ENCODE measurements at regions of chr10 and their contacts with region 1.

Region 1: DNA sequence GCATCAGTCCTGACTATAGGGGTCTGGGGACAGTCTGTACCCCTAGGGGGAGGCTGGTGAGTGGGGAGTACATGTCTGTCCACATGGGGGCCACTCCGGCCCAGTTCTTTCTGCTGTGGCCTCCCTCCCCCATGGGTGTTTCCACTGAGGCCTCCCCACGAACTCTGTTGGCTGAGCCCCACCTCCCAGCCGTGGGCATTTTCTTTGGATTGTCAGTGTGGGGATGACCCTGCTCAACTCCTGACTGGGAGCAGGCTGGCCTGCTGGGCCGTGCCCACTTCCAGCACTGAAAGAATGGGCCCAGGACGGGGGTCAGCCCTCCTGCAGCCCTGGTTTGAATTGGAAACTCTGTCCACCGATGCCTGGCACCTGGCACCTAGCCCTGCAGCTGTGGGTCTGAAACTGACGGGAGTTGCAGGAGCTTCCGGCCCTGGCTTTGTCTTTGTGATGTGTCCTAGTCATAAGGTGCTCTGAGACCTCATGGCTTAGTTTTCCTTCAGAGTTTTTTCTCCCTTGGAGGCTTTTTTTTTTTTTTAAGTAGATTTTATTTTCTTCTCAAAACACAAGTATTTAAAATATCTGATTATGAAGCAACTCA is 46.5 kb downstream of the LHPP start:
- DNase-seq: no peak
- H3K4me3 ChIP-seq: no peak overlapping the region
- H3K27ac ChIP-seq: no peak overlapping the region
- H3K4me1 ChIP-seq: peaks cover 11% of the 10 kb centered on the region
- H3K27me3 ChIP-seq: no peaks in the 10 kb centered on the region
- CTCF ChIP-seq: no peak

Region 2: GRCh38 chr10:123743976-123744411 is 764.2 kb before region 1 on chr10:
- CTCF ChIA-PET with region 1: no interaction called
- dilution Hi-C with region 1: no loop called
- in situ Hi-C with region 1: no loop called
- intact Hi-C with region 1: no loop called
- DNase-seq: no peak
- H3K4me3 ChIP-seq: no peak overlapping the region
- H3K27ac ChIP-seq: no peak overlapping the region
- H3K4me1 ChIP-seq: no peaks in the 10 kb centered on the region
- H3K27me3 ChIP-seq: peaks cover 5% of the 10 kb centered on the region
- CTCF ChIP-seq: no peak

Region 3: GRCh38 chr10:124332426-124332825 is 175.7 kb before region 1 on chr10:
- CTCF ChIA-PET with region 1: no interaction called
- dilution Hi-C with region 1: no loop called
- in situ Hi-C with region 1: no loop called
- intact Hi-C with region 1: no loop called
- DNase-seq: no peak
- H3K4me3 ChIP-seq: no peak overlapping the region
- H3K27ac ChIP-seq: no peak overlapping the region
- H3K4me1 ChIP-seq: no peaks in the 10 kb centered on the region
- H3K27me3 ChIP-seq: no peaks in the 10 kb centered on the region
- CTCF ChIP-seq: no peak

Region 4: DNA sequence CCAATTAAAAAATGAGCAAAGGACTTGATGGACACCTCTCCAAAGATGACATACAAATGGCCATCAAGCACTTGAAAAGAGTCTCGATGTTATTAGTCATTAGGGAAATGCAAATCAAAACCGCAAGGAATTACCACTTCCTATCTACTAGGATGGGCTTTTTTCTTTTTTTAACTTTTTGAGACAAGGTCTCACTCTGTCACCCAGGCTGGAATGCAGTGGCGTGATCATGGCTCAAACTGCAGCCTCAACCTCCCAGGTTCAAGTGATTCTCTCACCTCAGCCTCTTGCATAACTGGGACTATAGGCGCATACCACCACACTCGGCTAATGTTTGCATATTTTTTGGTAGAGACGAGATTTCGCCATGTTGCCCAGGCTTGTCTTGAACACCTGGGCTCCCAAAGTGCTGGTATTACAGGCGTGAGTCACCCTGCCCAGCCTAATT is 72.0 kb before region 1 on chr10:
- CTCF ChIA-PET with region 1: no interaction called
- dilution Hi-C with region 1: no loop called
- in situ Hi-C with region 1: no loop called
- intact Hi-C with region 1: no loop called
- DNase-seq: peak; percentile 99
- H3K4me3 ChIP-seq: no peak overlapping the region
- H3K27ac ChIP-seq: peak overlapping the region; percentile 50
- H3K4me1 ChIP-seq: peaks cover 33% of the 10 kb centered on the region
- H3K27me3 ChIP-seq: no peaks in the 10 kb centered on the region
- CTCF ChIP-seq: no peak

Region 5: DNA sequence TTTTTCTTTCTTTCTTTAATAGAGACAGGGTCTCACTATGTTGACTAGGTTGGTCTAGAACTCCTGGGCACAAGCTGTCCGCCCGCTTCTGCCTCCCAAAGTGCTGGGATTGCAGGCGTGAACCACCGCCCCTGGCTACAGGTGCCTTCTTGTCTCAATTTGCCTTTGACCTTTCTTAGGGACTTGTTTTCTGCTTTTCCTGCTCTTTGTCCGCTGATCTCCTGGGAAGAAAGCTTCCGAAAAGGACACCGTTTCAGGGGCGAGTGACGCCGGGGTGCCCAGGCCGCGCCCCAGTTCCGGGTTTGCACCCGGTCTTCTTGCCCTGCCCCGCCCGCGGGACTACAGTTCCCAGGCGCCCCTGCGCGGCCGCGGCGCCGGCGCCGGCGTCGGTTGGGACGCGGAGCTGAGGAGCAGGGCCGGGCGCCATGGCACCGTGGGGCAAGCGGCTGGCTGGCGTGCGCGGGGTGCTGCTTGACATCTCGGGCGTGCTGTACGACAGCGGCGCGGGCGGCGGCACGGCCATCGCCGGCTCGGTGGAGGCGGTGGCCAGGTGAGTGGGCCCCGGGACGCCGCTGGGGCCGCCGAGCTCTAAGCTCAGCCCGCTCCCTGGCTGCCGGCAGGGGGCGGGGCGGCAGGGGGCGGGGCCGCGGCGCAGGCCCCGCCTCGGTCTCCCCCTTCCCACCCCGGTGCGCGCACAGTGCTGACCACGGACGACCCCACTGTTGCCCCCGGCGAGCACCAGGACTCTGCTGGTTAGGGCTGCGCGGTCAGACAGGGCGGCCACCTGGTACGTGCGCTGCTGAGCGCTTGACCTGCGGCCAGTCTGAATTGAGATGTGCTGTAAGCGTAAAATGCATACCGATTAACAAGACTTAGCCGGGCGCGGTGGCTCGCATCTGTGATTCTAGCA is 46.5 kb before region 1 on chr10 and contains the start of gene LHPP:
- CTCF ChIA-PET with region 1: no interaction called
- dilution Hi-C with region 1: loop called (anchors 5 kb)
- in situ Hi-C with region 1: no loop called
- intact Hi-C with region 1: no loop called
- DNase-seq: peak; percentile 83
- H3K4me3 ChIP-seq: peak within 1 kb of the TSS; percentile 59 to 93 (median 92)
- H3K27ac ChIP-seq: no peak within 1 kb of the TSS
- H3K4me1 ChIP-seq: no peaks in the 10 kb centered on the region
- H3K27me3 ChIP-seq: no peaks in the 10 kb centered on the region
- CTCF ChIP-seq: peak in 1 of 2 donors; percentile 31
- total RNA-seq, gene LHPP: 7.0 to 22.1 TPM